AG04450 (cell line): ENCODE measurements at regions of chr11 and their contacts with region 1.

Region 1: GRCh38 chr11:59171508-59172322 is at the start of gene DTX4:
- DNase-seq: peak; percentile 76
- H3K4me3 ChIP-seq: peak within 1 kb of the TSS; percentile 71
- H3K27ac ChIP-seq: no peak within 1 kb of the TSS
- H3K27me3 ChIP-seq: peaks cover 3% of the 10 kb centered on the region
- CTCF ChIP-seq: peak; percentile 79
- polyA plus RNA-seq, gene DTX4: 1.4 and 2.2 TPM in 2 replicates

Region 2: GRCh38 chr11:59142530-59143507 is 28.9 kb before region 1 on chr11 and contains the start of gene FAM111A:
- CTCF ChIA-PET with region 1: interaction called, 20 read pairs
- POLR2A ChIA-PET with region 1: interaction called, 4 read pairs
- DNase-seq: peak; percentile 65
- H3K4me3 ChIP-seq: peak within 1 kb of the TSS; percentile 90
- H3K27ac ChIP-seq: peak within 1 kb of the TSS; percentile 97
- H3K27me3 ChIP-seq: no peaks in the 10 kb centered on the region
- CTCF ChIP-seq: peak; percentile 43
- polyA plus RNA-seq, gene FAM111A: 20.6 and 23.1 TPM in 2 replicates

Region 3: DNA sequence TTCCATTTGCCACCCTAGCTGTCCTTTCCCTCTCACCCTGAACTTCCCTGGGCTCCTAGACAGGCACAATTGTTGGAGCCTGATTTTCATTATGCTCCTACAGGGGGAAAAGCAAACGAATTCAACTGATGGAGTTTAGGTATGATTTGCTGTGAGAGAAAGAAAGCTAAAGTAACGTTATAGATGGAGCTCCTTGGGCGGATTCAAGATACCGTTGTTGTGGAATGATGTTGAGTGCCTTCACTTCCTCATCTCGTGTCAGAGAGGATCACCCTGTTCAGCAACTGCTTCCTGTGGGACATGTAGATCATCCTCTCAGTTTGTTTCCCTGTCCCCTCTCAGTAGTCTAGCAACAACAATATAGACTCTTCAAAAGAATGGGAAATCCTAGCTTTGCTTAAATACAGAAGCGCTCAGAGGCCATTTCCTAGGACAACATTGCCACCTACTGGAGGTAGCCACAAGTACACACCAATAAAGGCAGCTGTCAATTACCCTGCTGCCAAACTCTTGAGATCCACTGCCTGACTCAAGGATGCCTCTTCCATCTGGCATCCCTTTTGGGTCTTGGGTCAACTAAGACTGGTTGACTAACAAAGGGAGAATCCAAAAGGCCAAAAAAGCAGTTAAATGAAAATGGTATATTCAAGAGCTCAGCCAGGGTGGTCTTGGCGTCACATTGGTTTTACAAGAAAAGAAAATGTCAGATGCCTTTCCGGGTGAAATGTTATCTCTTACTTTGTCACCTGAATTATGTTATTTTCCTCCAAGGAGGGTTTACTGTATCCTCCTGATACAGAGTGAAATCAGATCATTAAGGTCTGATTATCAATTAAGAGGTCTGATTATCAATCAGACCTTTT is 13.3 kb before region 1 on chr11:
- CTCF ChIA-PET with region 1: interaction called, 65 read pairs
- POLR2A ChIA-PET with region 1: no interaction called
- DNase-seq: peak; percentile 37
- H3K4me3 ChIP-seq: no peak overlapping the region
- H3K27ac ChIP-seq: no peak overlapping the region
- H3K27me3 ChIP-seq: peaks cover 8% of the 10 kb centered on the region
- CTCF ChIP-seq: peak; percentile 85

Region 4: GRCh38 chr11:59191890-59192289 is 20.2 kb after region 1 on chr11:
- CTCF ChIA-PET with region 1: interaction called, 151 read pairs
- POLR2A ChIA-PET with region 1: interaction called, 8 read pairs
- DNase-seq: no peak
- H3K4me3 ChIP-seq: no peak overlapping the region
- H3K27ac ChIP-seq: no peak overlapping the region
- H3K27me3 ChIP-seq: no peaks in the 10 kb centered on the region
- CTCF ChIP-seq: no peak

Region 5: DNA sequence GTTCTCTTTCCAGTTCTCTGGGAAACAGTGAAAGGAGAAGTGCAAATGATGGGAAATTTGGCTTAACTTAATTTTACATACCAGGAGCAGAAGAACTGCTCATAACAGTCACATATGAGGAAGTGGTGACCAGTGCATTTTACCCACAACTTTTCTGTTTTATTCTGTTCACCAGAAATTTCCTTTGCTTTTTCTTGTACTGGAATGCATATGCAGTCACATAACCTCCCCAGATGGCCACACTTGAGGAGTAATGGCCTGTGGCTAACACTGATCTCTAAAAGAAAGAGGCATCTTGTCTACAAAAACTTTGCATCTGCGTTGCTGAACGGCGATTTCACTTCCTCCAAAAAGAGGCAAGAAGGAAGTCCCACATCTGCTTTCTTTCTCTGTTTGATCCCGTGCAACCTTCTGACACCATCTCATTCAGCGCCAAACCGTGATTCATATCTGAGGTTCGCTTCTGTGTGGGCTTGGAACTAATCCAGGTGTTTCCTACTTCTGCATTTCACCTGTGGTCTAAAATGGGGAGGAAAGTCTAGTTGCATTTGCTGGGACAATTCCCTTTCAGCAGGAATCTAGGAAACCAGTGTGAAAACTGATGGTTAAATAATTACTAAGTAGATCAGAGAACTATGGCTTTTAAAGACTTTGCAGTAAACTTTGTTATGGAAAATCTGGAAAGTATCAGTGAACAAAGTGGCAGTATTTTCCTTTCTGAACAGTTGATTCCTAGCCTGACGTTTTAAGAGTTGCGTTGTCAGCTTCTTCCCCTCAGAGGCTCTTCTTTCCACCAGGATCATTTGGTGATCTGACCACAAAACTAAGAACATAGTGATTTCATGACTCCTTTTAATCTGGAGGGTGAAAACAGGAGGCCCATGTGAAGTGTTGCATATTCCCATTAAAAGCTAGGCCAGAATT is 45.2 kb after region 1 on chr11:
- CTCF ChIA-PET with region 1: interaction called, 149 read pairs
- POLR2A ChIA-PET with region 1: interaction called, 7 read pairs
- DNase-seq: no peak
- H3K4me3 ChIP-seq: no peak overlapping the region
- H3K27ac ChIP-seq: no peak overlapping the region
- H3K27me3 ChIP-seq: peaks cover 22% of the 10 kb centered on the region
- CTCF ChIP-seq: no peak

Region 6: DNA sequence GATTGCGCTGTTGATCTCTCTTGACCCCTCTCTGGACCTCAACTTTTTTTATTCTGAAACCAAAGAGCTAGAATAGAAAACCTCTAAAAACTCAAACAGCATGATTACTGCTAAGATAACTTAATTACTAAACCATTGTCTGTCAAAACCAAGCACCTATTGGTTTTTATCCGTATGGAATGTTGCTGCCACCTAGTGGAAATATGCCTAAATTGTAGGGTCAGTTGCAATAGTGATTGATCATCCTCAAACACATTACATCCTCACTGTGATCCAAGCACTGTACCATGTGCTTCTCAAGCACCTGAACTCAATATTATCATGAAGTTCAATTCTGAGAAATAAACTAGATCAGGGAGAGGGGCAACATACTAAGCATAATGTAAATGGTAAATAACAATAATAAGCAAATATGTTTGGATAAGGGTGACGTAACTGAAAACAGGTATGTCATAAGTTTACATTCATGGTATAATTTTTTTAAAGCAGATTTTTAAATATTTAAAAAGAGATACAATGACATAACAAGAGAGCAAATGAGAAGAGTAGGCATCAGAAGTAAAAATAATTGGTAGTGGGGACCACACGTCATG is 258.3 kb after region 1 on chr11:
- CTCF ChIA-PET with region 1: interaction called, 33 read pairs
- POLR2A ChIA-PET with region 1: no interaction called
- DNase-seq: peak; percentile 18
- H3K4me3 ChIP-seq: no peak overlapping the region
- H3K27ac ChIP-seq: no peak overlapping the region
- H3K27me3 ChIP-seq: no peaks in the 10 kb centered on the region
- CTCF ChIP-seq: peak; percentile 85